Colonic mucosa (tissue), 4 donors: ENCODE measurements at regions of chr13 and their contacts with region 1.

Region 1: DNA sequence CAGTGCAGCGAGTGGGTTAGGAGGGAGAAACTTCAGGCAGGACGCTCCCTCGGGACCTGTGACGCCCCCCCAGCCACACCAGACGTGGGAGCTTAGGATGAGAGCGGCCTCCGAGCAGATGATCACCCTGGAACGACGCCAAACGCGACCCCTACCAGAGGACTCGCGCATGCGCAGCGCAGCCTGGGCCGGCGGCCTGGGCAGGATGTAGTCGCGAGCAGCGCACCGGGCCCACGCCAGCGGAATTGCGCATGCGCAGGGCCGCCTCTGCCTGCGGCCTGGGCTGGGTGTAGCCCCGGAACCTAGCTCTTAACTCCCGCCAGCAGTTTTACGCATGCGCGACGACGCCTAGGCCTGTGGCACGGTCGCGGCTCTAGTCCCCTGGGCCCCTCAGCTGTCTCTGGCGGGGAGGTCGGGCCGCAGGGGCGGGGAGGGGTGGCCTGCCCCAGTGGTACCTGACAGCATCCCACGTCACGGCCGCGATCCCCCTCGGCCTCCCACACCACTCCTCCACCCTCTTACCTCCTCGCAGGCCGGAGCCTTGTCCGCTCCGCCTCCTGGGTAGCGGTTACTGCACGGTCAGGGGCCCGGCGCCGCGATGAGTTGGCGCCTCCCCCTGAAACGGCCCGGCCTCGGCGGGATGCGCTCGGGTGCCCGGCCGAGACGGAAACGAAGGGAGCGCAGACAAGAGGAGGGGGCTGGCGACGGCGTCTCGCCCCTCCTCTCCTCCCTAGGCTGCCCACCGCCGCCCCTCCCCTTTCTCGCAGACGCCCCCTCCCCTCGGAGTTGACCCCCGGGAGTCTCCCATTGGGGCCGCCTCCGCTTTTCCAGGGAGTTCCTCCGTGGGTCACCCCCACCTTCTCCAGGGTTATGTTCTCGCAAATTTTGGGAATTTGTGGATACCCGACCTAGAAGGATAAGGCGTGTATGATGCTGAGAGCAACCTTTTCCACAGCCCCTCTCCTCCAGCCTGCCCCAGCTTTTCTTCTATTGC is at the start of gene RCBTB2:
- DNase-seq: peak; percentile 98
- H3K4me3 ChIP-seq: peak within 1 kb of the TSS; percentile 55
- H3K27ac ChIP-seq: peak within 1 kb of the TSS; percentile 91
- H3K4me1 ChIP-seq: no peaks in the 10 kb centered on the region
- H3K27me3 ChIP-seq: no peaks in the 10 kb centered on the region
- CTCF ChIP-seq: no peak
- total RNA-seq, gene RCBTB2: 3.3 to 5.5 TPM

Region 2: GRCh38 chr13:48222358-48223301 is 310.2 kb before region 1 on chr13:
- intact Hi-C with region 1: no loop called
- DNase-seq: no peak
- H3K4me3 ChIP-seq: peak overlapping the region; percentile 12
- H3K27ac ChIP-seq: peak overlapping the region; percentile 73
- H3K4me1 ChIP-seq: no peaks in the 10 kb centered on the region
- H3K27me3 ChIP-seq: no peaks in the 10 kb centered on the region
- CTCF ChIP-seq: no peak

Region 3: DNA sequence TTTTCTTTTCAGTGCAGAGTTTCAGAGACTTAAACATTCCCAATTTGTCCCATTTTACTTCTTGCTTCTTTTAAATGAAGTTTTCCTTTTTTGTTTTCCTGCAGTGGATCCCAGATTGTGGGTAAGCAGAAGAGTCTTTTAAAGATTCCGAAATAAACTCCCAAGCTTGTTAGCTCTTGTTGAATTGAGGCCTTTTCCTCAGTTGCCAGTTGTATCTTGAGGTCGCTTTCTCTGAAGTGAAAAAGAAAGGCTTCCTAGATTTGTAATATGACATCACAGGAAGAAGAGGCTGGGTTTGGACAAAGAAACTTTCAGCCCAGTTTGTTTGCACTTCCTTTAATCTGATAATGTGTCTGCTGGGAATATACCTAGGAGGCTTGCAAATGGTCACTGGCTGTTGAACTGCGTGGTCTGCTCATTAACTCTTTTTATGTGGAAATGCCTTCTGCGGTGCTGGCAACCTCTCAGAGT is 119.9 kb before region 1 on chr13 and contains the start of gene LPAR6:
- intact Hi-C with region 1: loop called (anchors 5 kb)
- DNase-seq: peak; percentile 42
- H3K4me3 ChIP-seq: peak within 1 kb of the TSS; percentile 42
- H3K27ac ChIP-seq: peak within 1 kb of the TSS; percentile 70
- H3K4me1 ChIP-seq: no peaks in the 10 kb centered on the region
- H3K27me3 ChIP-seq: no peaks in the 10 kb centered on the region
- CTCF ChIP-seq: no peak
- total RNA-seq, gene LPAR6: 4.9 to 17.8 TPM